ENCODE measurements at regions of chr5 and their contacts with region 1.

Region 1: GRCh38 chr5:125537661-125538060 is 791.2 kb upstream of the ZNF608 start:
- DNase-seq: no peak

Region 2: GRCh38 chr5:125492977-125493376 is 44.7 kb before region 1 on chr5:
- intact Hi-C with region 1: no loop called
- DNase-seq: no peak

Region 3: DNA sequence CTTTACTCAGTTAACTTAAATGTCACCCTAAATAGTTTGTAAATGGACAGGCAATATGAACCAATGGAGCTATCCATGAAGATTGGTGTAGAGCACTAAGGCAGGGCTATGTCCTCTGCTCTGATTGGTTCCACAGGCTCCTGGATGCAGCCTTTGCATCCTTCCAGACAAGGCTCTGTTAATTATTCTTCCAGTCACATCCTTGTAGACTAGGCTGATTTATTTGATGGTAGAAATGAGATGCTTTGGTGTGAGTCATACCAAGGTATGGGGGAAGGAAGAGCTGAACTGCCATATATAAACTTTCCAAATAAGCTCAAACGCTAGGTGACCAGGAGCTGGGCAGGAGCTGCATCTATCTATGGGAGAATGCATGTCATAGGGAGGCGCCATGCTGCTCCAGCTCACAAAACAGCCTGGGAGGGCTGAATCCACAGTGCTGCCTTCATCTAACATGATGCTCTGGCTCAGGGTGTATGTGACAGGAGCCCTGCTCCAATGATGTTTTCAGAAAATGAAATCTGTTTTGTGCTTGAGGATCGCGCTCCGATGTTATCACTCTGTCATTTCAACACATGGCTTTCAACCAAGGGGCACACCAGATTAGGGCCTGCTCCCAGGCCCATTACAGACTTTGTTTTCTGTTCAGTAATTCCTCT is 26.8 kb after region 1 on chr5:
- intact Hi-C with region 1: loop called in 1 of 2 experiments (anchors 1 kb)
- DNase-seq: no peak